ENCODE measurements at regions of chr1 and their contacts with region 1.

Region 1: GRCh38 chr1:165871311-165872067 is 44.1 kb downstream of the UCK2 start:
- DNase-seq: peak; percentile 86
- ATAC-seq: peak; percentile 87
- H3K4me3 ChIP-seq: no peak overlapping the region
- H3K27ac ChIP-seq: peak overlapping the region; percentile 19
- H3K4me1 ChIP-seq: peaks cover 31% of the 10 kb centered on the region
- H3K27me3 ChIP-seq: no peaks in the 10 kb centered on the region
- CTCF ChIP-seq: peak; percentile 43 to 62 (median 58); a peak in 5 of 6 replicates
- EP300 ChIP-seq: peak; percentile 56 to 66; a peak in 3 of 4 replicates
- POLR2A ChIP-seq: 0 out of 2 replicates have a peak, but pooled peaks have one; percentile 23
- RAD21 ChIP-seq: peak; percentile 69

Region 2: GRCh38 chr1:165073185-165074007 is 798.1 kb before region 1 on chr1:
- CTCF ChIA-PET with region 1: no interaction called
- POLR2A ChIA-PET with region 1: no interaction called
- RAD21 ChIA-PET with region 1: no interaction called
- SMC1A ChIA-PET with region 1: no interaction called
- in situ Hi-C with region 1: no loop called
- intact Hi-C with region 1: no loop called
- DNase-seq: no peak
- ATAC-seq: peak; percentile 84
- H3K4me3 ChIP-seq: no peak overlapping the region
- H3K27ac ChIP-seq: no peak overlapping the region
- H3K4me1 ChIP-seq: no peaks in the 10 kb centered on the region
- H3K27me3 ChIP-seq: no peaks in the 10 kb centered on the region
- CTCF ChIP-seq: peak; percentile 53 to 68 (median 54); a peak in 5 of 6 replicates
- EP300 ChIP-seq: no peak
- POLR2A ChIP-seq: no peak
- RAD21 ChIP-seq: peak; percentile 69

Region 3: GRCh38 chr1:165697881-165698760 is 173.4 kb before region 1 on chr1 and contains the start of gene ALDH9A1:
- CTCF ChIA-PET with region 1: interaction called, 10 read pairs
- POLR2A ChIA-PET with region 1: interaction called, 4 read pairs
- RAD21 ChIA-PET with region 1: interaction called, 4 read pairs
- SMC1A ChIA-PET with region 1: interaction called, 4 read pairs
- in situ Hi-C with region 1: no loop called
- intact Hi-C with region 1: no loop called
- DNase-seq: peak; percentile 41
- ATAC-seq: peak; percentile 95
- H3K4me3 ChIP-seq: peak within 1 kb of the TSS; percentile 73
- H3K27ac ChIP-seq: peak within 1 kb of the TSS; percentile 93
- H3K4me1 ChIP-seq: no peaks in the 10 kb centered on the region; the same call in 1 of the 2 replicates
- H3K27me3 ChIP-seq: no peaks in the 10 kb centered on the region
- CTCF ChIP-seq: peak in 2 of 3 experiments; percentile 19 to 28; a peak in 1 of 6 replicates
- EP300 ChIP-seq: no peak
- POLR2A ChIP-seq: peak; percentile 95
- RAD21 ChIP-seq: no peak
- polyA plus RNA-seq, gene ALDH9A1: 25.7 to 35.6 TPM

Region 4: DNA sequence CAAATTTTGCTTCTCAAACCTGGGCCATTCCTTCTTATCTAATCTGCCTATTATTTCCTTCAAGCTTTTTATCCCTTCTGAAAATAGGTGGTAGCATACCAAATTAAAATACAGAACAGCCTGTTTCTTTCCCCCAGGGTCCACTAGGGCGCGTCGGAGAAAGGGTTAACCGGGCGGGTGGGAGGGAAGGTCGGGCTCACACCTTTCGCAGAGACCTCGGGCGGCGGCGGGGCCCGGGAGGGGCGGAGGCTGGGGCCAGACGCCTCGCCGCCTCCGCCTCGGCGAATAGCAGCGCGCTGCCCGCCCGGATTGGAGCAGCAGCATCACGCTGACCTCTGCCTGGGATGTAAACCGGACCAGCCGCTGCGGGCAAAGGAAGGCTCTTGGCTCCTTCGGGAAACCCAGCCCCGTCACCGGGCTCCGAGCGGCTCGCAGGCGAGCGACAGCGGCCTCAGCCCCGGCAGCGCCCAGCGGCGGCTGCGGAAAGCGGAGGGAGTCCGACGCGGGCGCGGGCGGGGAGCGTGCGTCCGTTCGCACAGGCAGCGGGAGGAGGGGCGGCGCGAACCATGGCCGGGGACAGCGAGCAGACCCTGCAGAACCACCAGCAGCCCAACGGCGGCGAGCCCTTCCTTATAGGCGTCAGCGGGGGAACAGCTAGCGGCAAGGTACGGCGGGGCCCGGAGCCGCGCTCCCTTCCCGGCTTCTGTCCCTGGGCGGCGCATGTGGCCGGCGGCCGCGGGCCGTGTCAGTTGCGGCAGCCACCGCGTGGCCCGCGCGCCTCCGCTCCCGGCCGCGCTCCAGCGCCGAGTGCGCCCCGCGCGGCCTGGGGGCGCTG is 44.0 kb before region 1 on chr1 and contains the start of gene UCK2:
- CTCF ChIA-PET with region 1: interaction called, 36 read pairs
- POLR2A ChIA-PET with region 1: interaction called, 8 read pairs
- RAD21 ChIA-PET with region 1: interaction called, 65 read pairs
- SMC1A ChIA-PET with region 1: interaction called, 129 read pairs
- in situ Hi-C with region 1: no loop called
- intact Hi-C with region 1: loop called (anchors 2 kb)
- DNase-seq: no peak
- ATAC-seq: peak; percentile 87
- H3K4me3 ChIP-seq: peak within 1 kb of the TSS; percentile 86
- H3K27ac ChIP-seq: peak within 1 kb of the TSS; percentile 86
- H3K4me1 ChIP-seq: no peaks in the 10 kb centered on the region; the same call in 1 of the 2 replicates
- H3K27me3 ChIP-seq: no peaks in the 10 kb centered on the region
- CTCF ChIP-seq: peak in 1 of 3 experiments; percentile 9; a peak in 2 of 6 replicates
- EP300 ChIP-seq: no peak
- POLR2A ChIP-seq: peak; percentile 66
- RAD21 ChIP-seq: peak; percentile 43; the same call in 1 of the 2 replicates
- polyA plus RNA-seq, gene UCK2: 67.0 to 74.3 TPM

Region 5: DNA sequence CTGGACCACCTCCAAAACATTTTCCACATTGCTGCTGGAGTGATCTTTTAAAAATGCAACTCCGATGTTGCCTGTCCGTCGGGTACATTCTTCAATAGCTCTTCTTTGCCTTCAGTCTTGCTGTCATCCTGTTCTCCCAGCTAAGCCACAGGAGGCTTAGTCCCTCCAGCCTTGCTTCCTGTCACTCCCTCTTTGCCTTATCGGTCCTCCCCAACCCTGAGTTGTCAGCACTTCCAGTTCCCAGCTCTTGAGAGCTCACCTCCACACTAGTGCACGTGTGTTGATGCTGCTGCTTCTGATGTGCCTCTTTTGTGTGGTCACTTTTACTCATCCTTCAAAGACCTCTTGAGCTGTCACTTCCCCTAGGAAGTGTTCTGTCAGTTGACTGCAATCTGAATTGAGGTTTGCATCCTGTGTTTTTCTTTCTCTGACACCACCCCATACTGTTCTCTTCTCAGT is 28.8 kb before region 1 on chr1:
- CTCF ChIA-PET with region 1: interaction called, 13 read pairs
- POLR2A ChIA-PET with region 1: interaction called, 4 read pairs
- RAD21 ChIA-PET with region 1: interaction called, 13 read pairs
- SMC1A ChIA-PET with region 1: interaction called, 212 read pairs
- in situ Hi-C with region 1: no loop called
- intact Hi-C with region 1: no loop called
- DNase-seq: no peak
- ATAC-seq: peak; percentile 57
- H3K4me3 ChIP-seq: no peak overlapping the region
- H3K27ac ChIP-seq: peak overlapping the region; percentile 70
- H3K4me1 ChIP-seq: peaks cover 32% of the 10 kb centered on the region
- H3K27me3 ChIP-seq: no peaks in the 10 kb centered on the region
- CTCF ChIP-seq: no peak
- EP300 ChIP-seq: no peak
- POLR2A ChIP-seq: no peak
- RAD21 ChIP-seq: no peak

Region 6: DNA sequence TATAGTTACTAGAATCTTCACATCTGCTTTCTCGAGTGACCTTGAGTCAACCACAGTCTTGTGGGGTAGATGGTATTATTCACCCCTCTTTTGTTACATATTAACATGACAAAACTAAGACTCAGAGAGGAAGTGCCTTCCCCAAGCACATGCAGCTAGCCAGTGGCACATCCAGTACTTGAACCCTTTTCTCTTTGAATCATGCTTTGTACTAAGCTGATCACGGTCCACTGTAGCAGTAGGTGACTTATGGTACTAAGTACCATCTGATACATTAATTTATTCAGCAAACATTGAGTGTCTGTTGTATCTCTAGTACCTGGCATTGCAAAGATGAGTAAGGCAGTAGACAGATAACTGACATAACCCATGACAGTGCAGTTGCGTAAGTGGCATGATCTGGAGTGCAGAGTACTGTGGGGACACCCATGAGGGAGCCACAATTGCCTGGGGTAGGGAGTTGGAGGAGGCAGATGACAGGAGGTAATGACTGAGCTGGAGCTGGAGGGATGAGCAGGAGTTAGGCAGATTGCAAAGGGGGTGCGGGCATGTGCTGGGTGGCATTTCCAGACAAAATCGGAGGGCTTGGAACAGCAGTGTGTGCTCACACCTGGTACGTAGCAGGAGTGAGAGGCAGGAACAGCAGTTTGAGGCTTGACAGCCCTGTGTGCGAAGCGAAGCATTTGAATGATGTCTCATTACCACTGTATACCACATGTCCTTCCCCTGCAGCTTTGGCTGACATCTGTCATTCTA is 14.3 kb before region 1 on chr1:
- CTCF ChIA-PET with region 1: interaction called, 62 read pairs
- POLR2A ChIA-PET with region 1: interaction called, 13 read pairs
- RAD21 ChIA-PET with region 1: interaction called, 31 read pairs
- SMC1A ChIA-PET with region 1: interaction called, 212 read pairs
- in situ Hi-C with region 1: no loop called
- intact Hi-C with region 1: no loop called
- DNase-seq: no peak
- ATAC-seq: peak; percentile 90
- H3K4me3 ChIP-seq: no peak overlapping the region
- H3K27ac ChIP-seq: peak overlapping the region; percentile 38; the same call in 1 of the 2 replicates
- H3K4me1 ChIP-seq: peaks cover 32% of the 10 kb centered on the region
- H3K27me3 ChIP-seq: no peaks in the 10 kb centered on the region
- CTCF ChIP-seq: no peak
- EP300 ChIP-seq: peak in 1 of 2 experiments; percentile 7; a peak in 1 of 4 replicates
- POLR2A ChIP-seq: no peak
- RAD21 ChIP-seq: no peak

Region 7: GRCh38 chr1:165914136-165914798 is 42.8 kb after region 1 on chr1:
- CTCF ChIA-PET with region 1: interaction called, 13 read pairs
- POLR2A ChIA-PET with region 1: no interaction called
- RAD21 ChIA-PET with region 1: interaction called, 9 read pairs
- SMC1A ChIA-PET with region 1: interaction called, 11 read pairs
- in situ Hi-C with region 1: no loop called
- intact Hi-C with region 1: no loop called
- DNase-seq: peak; percentile 54
- ATAC-seq: peak; percentile 95
- H3K4me3 ChIP-seq: no peak overlapping the region
- H3K27ac ChIP-seq: no peak overlapping the region
- H3K4me1 ChIP-seq: no peaks in the 10 kb centered on the region
- H3K27me3 ChIP-seq: no peaks in the 10 kb centered on the region
- CTCF ChIP-seq: peak; percentile 78 to 97 (median 87); a peak in 5 of 6 replicates
- EP300 ChIP-seq: no peak
- POLR2A ChIP-seq: no peak
- RAD21 ChIP-seq: peak; percentile 99

Region 8: DNA sequence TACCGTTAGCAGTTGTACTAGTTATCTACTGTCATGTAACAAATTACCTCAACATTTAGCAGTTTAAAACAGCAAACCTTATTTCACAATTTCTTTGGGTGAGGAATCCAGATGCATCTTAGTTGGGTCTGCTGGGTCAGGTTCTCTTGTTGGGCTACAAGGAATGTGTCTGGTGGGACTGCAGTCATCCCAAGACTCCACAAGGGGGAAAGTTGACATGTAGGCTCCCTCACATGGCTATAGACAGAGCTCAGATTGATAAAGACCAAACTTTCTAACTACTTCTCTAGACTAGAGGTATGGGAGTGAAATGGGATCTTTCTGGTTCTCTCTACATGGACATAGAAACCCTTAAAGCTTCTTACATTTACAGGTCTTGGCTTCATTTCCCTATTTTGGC is 116.8 kb after region 1 on chr1:
- CTCF ChIA-PET with region 1: no interaction called
- POLR2A ChIA-PET with region 1: no interaction called
- RAD21 ChIA-PET with region 1: no interaction called
- SMC1A ChIA-PET with region 1: no interaction called
- in situ Hi-C with region 1: no loop called
- intact Hi-C with region 1: no loop called
- DNase-seq: no peak
- ATAC-seq: no peak
- H3K4me3 ChIP-seq: no peak overlapping the region
- H3K27ac ChIP-seq: no peak overlapping the region
- H3K4me1 ChIP-seq: no peaks in the 10 kb centered on the region
- H3K27me3 ChIP-seq: no peaks in the 10 kb centered on the region
- CTCF ChIP-seq: no peak
- EP300 ChIP-seq: no peak
- POLR2A ChIP-seq: no peak
- RAD21 ChIP-seq: no peak

Region 9: GRCh38 chr1:166073489-166073888 is 202.0 kb after region 1 on chr1:
- CTCF ChIA-PET with region 1: no interaction called
- POLR2A ChIA-PET with region 1: no interaction called
- RAD21 ChIA-PET with region 1: no interaction called
- SMC1A ChIA-PET with region 1: no interaction called
- in situ Hi-C with region 1: no loop called
- intact Hi-C with region 1: no loop called
- DNase-seq: no peak
- ATAC-seq: no peak
- H3K4me3 ChIP-seq: no peak overlapping the region
- H3K27ac ChIP-seq: no peak overlapping the region
- H3K4me1 ChIP-seq: no peaks in the 10 kb centered on the region
- H3K27me3 ChIP-seq: no peaks in the 10 kb centered on the region
- CTCF ChIP-seq: no peak
- EP300 ChIP-seq: no peak
- POLR2A ChIP-seq: no peak
- RAD21 ChIP-seq: no peak

Region 10: DNA sequence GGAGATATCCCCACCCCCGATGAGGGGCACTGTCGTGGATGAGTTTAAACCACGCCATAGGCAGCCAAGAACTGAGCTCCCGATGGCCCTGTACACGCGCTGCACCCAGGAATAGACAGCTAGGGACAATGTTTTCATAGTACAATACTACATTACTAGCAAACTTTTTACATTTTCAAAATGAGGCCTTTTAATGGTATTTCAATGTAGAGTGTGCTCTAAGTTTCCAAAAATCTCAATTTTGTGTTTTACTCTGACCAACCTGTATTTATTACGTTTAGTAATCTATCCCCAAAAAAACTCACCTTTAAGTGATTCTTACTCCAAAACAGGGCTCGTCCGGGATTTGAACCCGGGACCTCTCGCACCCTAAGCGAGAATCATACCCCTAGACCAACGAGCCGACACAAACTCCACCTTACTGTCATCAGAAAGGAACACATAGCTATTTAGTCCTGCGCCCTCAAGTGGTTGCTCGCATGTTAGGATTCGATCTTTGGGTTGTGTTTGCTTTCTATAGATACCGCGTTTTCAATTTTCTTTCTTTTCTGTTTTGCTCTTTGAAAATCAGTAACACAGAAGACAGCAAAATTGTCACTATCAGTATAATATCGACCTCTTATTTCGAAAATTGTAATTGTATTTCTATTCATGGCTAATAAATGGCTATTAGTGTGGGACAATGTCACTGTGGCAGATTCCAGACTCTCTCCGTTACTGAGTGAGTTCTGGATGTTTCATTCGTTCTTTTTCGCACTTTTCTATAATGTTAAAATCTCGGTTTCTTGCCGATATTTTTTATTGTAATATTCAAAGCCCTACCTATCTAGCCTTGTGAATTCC is 1843.9 kb after region 1 on chr1:
- CTCF ChIA-PET with region 1: no interaction called
- POLR2A ChIA-PET with region 1: no interaction called
- RAD21 ChIA-PET with region 1: no interaction called
- SMC1A ChIA-PET with region 1: no interaction called
- in situ Hi-C with region 1: no loop called
- intact Hi-C with region 1: loop called (anchors 10 kb)
- DNase-seq: peak; percentile 97
- ATAC-seq: peak; percentile 40
- H3K4me3 ChIP-seq: peak overlapping the region; percentile 95
- H3K27ac ChIP-seq: peak overlapping the region; percentile 98
- H3K4me1 ChIP-seq: peaks cover 24% of the 10 kb centered on the region
- H3K27me3 ChIP-seq: no peaks in the 10 kb centered on the region
- CTCF ChIP-seq: peak; percentile 72 to 99 (median 80)
- EP300 ChIP-seq: 0 out of 4 replicates have a peak, but pooled peaks of 1 of the 2 experiments have one; percentile 60
- POLR2A ChIP-seq: no peak
- RAD21 ChIP-seq: peak; percentile 43; the same call in 1 of the 2 replicates